ENCODE measurements at regions of chr15 and their contacts with region 1.

Region 1: DNA sequence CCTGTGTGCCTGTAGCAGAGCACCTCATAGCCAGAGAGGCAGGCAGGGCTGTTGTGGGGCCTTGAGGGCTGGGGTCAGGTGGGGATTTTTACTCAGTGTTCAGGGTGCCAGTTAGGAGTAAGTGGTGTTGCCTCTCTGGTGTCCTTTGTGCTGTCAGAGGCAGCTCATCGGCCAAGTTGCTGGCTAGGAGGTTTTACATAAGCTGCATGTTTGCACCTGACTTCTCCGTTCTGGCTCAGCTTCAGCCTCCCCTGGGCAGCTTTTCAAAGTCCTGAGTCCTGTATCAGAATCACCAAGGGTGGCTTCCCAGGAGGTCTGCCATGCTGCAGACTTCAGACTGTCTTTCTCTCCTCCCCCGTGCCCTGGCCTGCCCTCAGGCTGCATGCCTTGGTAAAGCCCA is 242.6 kb upstream of the TPM1 start:
- DNase-seq: no peak
- H3K4me3 ChIP-seq: no peak overlapping the region
- H3K27ac ChIP-seq: peak overlapping the region in 1 of 4 donors; percentile 2
- H3K4me1 ChIP-seq: peaks cover 4 to 16% (median 6%) of the 10 kb centered on the region in 4 donors
- H3K27me3 ChIP-seq: no peaks in the 10 kb centered on the region
- CTCF ChIP-seq: no peak
- EP300 ChIP-seq: no peak
- POLR2A ChIP-seq: no peak

Region 2: GRCh38 chr15:62482785-62483429 is 317.0 kb before region 1 on chr15:
- intact Hi-C with region 1: no loop called
- DNase-seq: no peak
- H3K4me3 ChIP-seq: no peak overlapping the region
- H3K27ac ChIP-seq: no peak overlapping the region
- H3K4me1 ChIP-seq: peaks cover 0 to 19% (median 15%) of the 10 kb centered on the region in 4 donors
- H3K27me3 ChIP-seq: no peaks in the 10 kb centered on the region
- CTCF ChIP-seq: no peak
- EP300 ChIP-seq: no peak
- POLR2A ChIP-seq: no peak

Region 3: DNA sequence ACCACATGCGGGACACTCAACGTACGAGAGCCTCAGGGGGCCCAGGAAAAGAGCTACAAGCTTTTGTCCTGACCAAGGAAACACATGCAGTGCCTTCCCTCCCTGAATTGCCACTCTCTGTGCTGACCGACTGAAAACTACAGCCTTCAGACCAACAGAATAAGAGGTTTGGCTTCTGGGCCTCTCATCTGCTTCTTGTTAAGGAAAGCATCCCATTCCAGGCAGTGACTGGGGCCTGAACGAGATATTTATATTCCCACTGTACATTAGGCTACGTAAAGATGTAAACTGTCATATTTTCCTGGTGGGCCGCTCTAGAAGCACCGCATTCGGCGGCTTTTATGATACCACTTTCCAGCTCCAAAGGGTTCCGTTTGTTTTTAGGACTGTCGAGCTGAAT is 33.7 kb after region 1 on chr15:
- intact Hi-C with region 1: loop called (anchors 5 kb)
- DNase-seq: no peak
- H3K4me3 ChIP-seq: no peak overlapping the region
- H3K27ac ChIP-seq: no peak overlapping the region
- H3K4me1 ChIP-seq: peaks cover 0 to 2% (median under 1%) of the 10 kb centered on the region in 4 donors
- H3K27me3 ChIP-seq: no peaks in the 10 kb centered on the region
- CTCF ChIP-seq: no peak
- EP300 ChIP-seq: no peak
- POLR2A ChIP-seq: no peak

Region 4: DNA sequence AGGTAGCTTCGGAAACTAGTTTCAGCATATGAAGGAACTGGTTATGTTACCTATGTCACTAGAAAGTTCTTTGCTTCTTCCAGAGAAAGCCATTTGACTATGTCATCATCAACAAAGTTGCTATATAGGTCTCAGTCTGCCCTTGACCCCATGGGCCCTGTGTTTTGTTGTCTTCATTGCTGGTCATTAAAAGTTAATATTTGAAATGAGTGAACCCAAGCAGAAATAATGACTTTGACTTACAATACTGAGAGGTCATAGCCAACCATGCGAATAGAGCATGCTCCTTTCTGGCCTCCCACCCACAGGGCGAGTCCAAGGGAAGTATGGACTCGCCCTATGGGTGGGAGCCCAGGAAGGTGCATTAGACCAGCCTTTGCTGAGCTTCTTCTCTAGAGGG is 518.4 kb after region 1 on chr15:
- intact Hi-C with region 1: no loop called
- DNase-seq: no peak
- H3K4me3 ChIP-seq: no peak overlapping the region
- H3K27ac ChIP-seq: no peak overlapping the region
- H3K4me1 ChIP-seq: peaks cover 0 to 5% (median 0%) of the 10 kb centered on the region in 4 donors
- H3K27me3 ChIP-seq: no peaks in the 10 kb centered on the region
- CTCF ChIP-seq: no peak
- EP300 ChIP-seq: no peak
- POLR2A ChIP-seq: no peak

Measured in esophagus muscularis mucosa (tissue), 4 donors.